ENCODE measurements at regions of chr20 and their contacts with region 1.

Region 1: DNA sequence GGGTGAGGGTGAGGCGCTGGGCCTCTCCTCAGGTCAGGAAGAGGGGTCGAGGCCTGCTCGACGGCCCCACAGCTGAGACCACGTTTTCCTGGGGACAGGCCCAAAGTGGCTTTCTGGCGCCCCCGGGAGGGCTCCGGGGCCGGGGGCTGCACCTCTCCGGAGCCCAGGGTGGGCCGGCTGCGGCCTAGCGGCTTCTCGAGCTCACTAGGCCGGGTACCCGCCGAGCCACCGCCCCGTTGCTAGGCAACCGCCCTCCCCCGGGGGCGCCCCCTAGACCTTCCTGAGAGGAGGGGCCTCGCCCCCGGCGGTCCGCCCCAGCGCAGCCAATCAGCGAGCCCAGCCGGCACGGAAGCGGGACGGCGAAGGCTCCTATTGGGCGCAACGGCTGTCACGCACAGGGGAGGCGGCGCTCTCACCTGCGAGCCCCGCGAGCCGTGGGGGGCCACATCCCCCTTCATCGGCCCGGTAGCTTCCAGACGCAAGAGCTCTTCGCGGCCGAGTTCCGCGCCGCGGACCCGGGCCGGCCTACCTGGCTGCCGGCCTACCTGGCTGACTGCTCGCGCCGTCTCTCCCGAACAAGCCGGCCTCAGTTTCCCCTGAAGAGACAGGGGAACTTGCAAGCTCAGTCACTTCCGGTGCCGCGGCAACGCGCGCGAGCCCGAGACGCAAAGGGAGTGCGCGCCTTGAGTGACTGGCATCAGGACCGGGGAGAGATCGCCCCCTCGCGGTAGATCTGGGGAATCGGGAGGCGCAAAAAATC is 831 bp upstream of the BCL2L1 start:
- DNase-seq: peak; percentile 100
- CTCF ChIP-seq: peak; percentile 78

Region 2: DNA sequence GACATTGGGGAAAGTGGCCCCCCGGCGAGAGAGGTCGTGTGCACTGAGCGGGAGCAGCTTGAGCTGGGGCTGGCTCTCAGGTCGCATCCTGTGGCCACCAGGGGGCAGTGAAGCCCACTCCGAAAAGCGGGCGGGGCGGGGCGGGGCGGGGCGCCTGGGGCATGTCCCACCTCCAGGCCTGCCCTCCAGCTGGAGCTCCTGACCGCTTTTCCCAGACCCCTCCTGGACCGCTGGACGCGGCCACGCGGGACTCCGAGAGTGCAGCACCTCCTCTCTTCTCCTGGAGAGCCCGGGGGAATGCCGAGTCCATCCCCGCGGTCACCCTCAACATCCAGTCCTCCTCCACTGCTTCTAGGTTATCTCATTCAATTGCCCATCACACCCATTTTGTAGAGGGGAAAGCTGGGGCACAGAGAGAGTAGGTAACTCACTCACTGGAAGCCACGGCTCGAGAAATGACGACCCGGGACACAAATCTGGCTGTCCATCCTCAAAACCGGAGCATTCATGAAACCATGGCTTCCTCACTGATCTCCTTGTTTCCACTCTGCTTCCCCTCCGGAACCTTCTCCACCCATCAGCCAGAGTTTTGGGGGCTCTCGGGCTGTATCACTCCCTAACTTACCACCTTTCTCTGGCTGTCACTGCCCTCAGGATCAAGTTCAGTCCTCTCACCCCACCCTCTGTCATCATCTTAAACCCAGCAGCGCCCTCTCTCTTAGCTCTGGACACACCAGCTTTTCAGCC is 61.7 kb before region 1 on chr20:
- in situ Hi-C with region 1: loop called (anchors 5 kb)
- DNase-seq: peak; percentile 91
- CTCF ChIP-seq: peak; percentile 77

Region 3: GRCh38 chr20:31806564-31807355 is 83.3 kb after region 1 on chr20:
- in situ Hi-C with region 1: no loop called
- DNase-seq: no peak
- CTCF ChIP-seq: no peak

Region 4: DNA sequence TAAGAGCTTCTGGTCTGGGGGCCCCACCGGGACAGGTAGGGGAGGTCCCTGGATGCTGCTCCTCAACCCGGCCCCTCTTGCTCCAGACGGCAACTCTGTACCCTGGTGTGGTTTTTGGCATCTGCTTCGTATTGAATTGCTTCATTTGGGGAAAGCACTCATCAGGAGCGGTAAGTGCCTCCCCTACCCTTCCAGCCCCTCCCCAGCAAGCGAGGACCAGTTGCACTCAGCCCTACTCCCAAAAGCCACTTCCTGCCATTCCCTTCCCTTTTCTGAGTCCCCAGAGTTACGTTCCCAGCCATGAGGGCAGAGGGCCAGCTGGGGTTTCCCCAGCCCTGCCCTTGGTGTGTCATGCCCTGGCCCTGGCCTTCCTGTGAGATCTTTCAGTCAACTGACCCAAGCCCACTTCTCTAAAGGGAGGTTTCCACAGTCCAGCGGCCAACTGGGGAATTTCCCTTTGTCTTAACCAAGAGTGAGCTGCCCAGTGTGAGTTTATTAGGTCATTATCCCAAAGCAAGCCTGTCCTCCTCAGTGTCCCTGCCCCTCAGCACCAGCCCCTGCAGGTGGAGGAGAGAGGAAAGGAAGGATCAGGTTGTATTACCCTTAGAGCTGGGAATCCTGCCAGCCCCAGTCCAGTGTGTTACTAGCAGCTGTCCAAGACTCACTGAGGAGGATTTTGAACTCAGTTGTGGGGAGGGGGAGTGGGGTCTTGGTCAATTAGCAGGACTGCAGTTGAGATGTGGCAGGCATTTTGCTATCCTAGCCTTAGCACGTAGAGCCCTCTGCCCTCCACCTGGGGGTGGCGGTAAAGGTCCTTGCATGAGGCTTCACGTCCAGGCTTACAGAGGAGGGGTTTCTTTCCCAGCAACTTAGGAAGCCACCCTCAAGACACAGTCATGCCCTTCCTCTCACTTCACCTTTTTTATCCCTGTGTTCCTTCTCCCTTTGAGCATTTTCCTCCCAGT is 431.8 kb after region 1 on chr20:
- in situ Hi-C with region 1: no loop called
- DNase-seq: peak; percentile 60
- CTCF ChIP-seq: peak; percentile 46

Region 5: DNA sequence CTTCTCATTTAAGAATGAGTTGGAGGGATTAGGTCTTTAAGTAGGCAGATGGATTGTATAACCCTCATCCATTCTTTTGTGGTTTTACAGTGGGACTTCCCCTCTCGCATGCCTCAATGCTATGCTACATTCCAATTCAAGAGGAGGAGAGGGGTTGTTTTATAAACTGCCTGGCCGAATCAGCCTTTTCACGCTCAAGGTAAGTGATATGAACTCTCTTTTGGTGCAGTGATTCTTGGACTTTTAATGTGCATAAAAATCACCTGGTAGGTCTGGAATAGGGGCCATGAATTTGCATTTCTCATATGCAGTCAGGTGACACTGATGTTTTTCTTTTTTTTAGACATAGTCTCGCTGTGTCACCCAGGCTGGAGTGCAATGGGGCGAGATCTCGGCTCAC is 645.4 kb after region 1 on chr20:
- in situ Hi-C with region 1: no loop called
- DNase-seq: no peak
- CTCF ChIP-seq: no peak